Calu3 (cell line): ENCODE measurements at regions of chr14 and their contacts with region 1.

Region 1: DNA sequence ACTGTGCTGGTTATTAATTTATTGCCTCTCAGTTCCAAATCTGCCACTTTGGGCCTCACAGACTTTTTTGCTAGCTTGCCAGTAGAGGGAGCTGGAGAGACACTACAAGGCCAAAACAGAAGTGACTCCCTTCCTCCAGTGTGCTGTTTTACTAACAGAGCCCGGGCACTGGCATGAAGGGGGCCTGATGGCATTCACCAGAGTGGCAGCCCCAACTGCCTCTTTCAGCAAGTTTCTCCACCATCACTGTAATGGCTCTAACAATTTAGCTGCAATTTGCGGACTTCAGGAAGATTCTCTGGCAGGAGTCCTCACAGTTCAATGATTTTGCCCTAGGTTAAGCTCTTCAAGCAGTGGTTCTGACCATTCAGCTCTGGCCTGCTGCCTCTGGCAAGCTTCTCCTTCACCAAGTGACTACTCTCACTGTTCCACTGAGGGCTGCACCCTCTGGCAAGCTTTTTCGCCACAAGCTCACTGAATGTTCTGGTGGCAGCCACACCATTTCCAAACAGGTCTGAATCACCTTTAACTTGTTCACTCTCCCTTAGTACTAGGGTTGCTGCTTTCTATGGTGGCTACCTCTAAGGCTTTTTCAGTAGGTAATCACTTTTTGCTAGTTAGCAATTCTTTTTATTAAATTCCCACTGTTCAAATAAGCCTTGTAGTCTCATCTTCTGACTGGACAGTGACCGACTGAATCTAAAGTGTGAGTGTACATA is 104.9 kb downstream of the ZC3H14 start:
- DNase-seq: peak; percentile 60
- H3K4me3 Mint-ChIP-seq: no peak overlapping the region
- H3K27ac Mint-ChIP-seq: no peak overlapping the region
- H3K4me1 Mint-ChIP-seq: no peaks in the 10 kb centered on the region
- H3K27me3 Mint-ChIP-seq: peaks cover 13% of the 10 kb centered on the region
- CTCF ChIP-seq: peak; percentile 41

Region 2: DNA sequence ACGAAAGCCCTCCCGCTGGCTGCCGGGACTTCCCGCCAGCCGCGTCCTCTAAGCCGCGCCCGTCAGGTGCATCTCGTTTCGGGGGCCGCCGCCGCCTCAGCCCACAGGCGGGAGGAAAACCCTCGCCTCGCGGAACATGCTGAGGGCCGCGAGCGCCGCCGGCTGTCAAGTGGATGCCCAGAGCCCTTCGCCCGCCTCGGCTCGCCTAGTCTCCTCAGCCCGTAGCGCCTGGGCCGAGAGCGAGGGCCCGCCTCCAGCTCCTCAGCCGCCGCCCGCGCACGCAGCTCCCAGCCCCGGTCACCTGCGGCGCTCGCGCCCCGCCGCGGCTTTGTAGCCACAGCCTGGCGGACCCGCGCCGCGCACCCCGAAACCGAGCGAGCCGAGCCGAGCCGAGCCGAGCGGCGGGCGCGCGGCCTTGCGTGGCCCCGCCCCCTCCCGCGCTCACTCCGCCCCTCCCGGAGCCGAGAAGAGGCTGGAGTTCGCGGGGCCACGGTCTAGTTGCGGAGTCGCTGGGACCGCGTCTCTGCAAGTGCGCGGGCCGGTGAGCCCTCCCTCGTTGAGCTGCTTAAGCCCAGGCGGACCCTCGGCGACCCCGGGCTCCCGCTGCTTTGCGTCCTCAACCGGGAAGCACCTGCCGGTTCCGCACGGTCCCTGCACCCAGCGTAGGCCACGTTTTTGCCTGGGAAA is 125.0 kb after region 1 on chr14 and contains the start of gene EML5:
- CTCF ChIA-PET with region 1: no interaction called
- intact Hi-C with region 1: loop called (anchors 10 kb)
- DNase-seq: peak; percentile 85
- H3K4me3 Mint-ChIP-seq: peak within 1 kb of the TSS; percentile 66
- H3K27ac Mint-ChIP-seq: no peak within 1 kb of the TSS
- H3K4me1 Mint-ChIP-seq: no peaks in the 10 kb centered on the region
- H3K27me3 Mint-ChIP-seq: peaks cover 20% of the 10 kb centered on the region
- CTCF ChIP-seq: peak; percentile 27
- total RNA-seq, gene EML5: 0.52 and 0.78 TPM in 2 replicates

Region 3: DNA sequence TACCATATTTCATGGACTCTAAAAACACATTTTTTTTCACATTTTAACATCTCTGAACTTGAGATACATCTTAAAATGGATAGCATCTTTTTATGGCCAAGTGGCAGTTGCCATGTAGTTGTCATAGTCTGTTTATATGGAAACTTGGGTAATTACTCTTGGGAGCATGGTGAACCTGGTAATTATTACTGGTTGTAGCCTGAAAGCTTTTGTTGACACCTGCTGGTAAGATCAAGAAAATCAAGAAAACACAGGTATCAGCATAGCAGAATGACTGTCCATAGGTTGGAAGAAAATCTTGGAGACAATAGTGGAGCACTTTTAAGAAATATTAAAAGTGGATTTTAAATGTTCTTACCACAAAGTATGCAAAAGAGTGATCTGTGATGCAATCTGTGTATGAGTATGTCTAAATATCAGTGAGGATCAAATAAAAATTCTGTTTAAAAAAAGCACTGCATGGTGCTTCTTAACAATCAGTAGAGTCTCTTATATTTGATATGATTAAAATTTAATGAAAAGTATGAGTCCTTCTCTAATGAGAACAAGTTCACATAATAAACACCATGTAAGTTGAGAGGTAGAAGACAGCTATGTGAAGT is 200.9 kb after region 1 on chr14:
- CTCF ChIA-PET with region 1: interaction called, 4 read pairs
- intact Hi-C with region 1: loop called (anchors 1 kb)
- DNase-seq: no peak
- H3K4me3 Mint-ChIP-seq: no peak overlapping the region
- H3K27ac Mint-ChIP-seq: no peak overlapping the region
- H3K4me1 Mint-ChIP-seq: no peaks in the 10 kb centered on the region
- H3K27me3 Mint-ChIP-seq: no peaks in the 10 kb centered on the region
- CTCF ChIP-seq: no peak

Region 4: GRCh38 chr14:89013084-89013504 is 345.4 kb after region 1 on chr14:
- CTCF ChIA-PET with region 1: no interaction called
- intact Hi-C with region 1: loop called (anchors 1 kb)
- DNase-seq: peak; percentile 69
- H3K4me3 Mint-ChIP-seq: peak overlapping the region; percentile 84
- H3K27ac Mint-ChIP-seq: peak overlapping the region; percentile 27
- H3K4me1 Mint-ChIP-seq: peaks cover 10% of the 10 kb centered on the region
- H3K27me3 Mint-ChIP-seq: peaks cover 21% of the 10 kb centered on the region
- CTCF ChIP-seq: no peak

Region 5: DNA sequence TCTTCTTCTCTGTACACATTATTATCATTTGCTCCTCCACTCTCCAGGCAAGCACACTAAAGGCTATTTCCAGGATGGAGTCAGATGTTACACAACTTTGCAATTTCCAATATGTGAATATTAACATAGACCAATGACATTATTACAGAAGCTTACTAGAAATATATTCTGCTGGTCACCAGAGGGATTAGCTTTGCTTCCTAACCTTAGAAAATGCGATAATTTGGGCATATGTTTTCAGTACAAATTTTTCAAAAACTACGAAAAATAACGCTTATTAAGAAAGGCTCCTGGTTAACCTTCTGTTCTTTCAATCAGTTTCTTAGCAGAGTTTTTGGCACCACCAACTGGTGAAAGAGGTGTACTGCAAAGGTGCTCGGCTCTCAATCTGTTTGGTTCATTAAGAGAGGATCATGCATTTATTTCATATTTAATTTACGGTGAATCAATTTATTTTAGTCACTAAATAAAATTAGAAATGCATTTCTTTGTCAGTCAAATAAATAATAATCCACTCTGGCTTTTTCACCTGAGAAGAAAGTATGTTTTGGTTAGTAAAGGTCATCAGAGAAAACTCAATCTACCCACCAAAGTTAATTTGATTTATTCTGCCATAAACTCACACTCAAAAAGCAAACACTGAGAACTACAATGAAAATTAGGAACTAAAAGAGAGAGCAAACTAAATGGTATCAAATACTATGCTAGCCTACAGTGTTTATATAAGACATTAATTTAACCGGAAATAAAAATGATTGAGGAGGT is 1247.6 kb after region 1 on chr14:
- CTCF ChIA-PET with region 1: no interaction called
- intact Hi-C with region 1: loop called (anchors 10 kb)
- DNase-seq: peak; percentile 56
- H3K4me3 Mint-ChIP-seq: no peak overlapping the region
- H3K27ac Mint-ChIP-seq: no peak overlapping the region
- H3K4me1 Mint-ChIP-seq: peaks cover 27% of the 10 kb centered on the region
- H3K27me3 Mint-ChIP-seq: no peaks in the 10 kb centered on the region
- CTCF ChIP-seq: peak; percentile 77